Gastrocnemius medialis (tissue), 4 donors: ENCODE measurements at regions of chr6 and their contacts with region 1.

Region 1: DNA sequence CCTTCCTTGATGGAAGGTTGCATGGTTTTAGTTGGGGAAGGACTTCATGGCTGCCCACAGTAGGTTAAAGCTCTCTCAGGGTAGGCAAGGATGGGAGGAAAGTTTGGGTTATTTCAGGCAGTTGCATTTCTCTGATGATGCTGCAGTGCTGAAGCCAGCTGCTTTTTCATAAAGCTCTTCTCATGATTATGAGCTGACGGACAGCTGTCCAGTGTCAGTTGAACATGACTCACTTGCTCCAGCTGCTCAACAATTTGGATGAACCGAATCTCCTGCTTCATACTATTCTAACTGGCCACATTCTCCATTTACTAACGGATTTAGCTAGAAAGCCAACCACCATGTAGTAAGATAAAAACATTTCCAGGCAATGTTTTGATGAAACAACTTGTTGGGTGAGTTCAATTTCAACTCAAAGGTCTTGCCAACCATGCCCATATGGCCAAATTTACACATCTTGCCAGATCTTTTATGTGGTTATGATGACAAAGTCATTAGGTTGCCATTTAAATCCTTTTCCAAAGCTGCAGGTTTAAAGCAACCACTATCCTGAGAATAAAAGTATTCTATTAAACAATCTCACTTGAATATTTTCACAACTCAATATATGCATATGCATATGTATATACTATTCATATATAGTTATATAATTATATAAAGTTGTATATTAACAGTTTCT is 125.9 kb downstream of the HS3ST5 start:
- DNase-seq: peak; percentile 76 to 78
- ATAC-seq: peak; percentile 91 to 96
- H3K4me3 ChIP-seq: peak overlapping the region in 3 of 4 donors; percentile 3 to 39 (median 21)
- H3K27ac ChIP-seq: peak overlapping the region; percentile 77 to 90 (median 82)
- H3K4me1 ChIP-seq: peaks cover 0 to 22% of the 10 kb centered on the region in 2 donors
- H3K27me3 ChIP-seq: no peaks in the 10 kb centered on the region
- CTCF ChIP-seq: no peak
- POLR2A ChIP-seq: no peak

Region 2: GRCh38 chr6:113632220-113632864 is 584.6 kb before region 1 on chr6:
- in situ Hi-C with region 1: no loop called
- intact Hi-C with region 1: loop called (anchors 5 kb)
- DNase-seq: peak; percentile 88 to 90
- ATAC-seq: peak; percentile 90 to 95
- H3K4me3 ChIP-seq: peak overlapping the region; percentile 36 to 59 (median 50)
- H3K27ac ChIP-seq: peak overlapping the region; percentile 87 to 98 (median 90)
- H3K4me1 ChIP-seq: peaks cover 47 to 59% of the 10 kb centered on the region in 2 donors
- H3K27me3 ChIP-seq: no peaks in the 10 kb centered on the region
- CTCF ChIP-seq: no peak
- POLR2A ChIP-seq: peak; percentile 61 to 90

Region 3: DNA sequence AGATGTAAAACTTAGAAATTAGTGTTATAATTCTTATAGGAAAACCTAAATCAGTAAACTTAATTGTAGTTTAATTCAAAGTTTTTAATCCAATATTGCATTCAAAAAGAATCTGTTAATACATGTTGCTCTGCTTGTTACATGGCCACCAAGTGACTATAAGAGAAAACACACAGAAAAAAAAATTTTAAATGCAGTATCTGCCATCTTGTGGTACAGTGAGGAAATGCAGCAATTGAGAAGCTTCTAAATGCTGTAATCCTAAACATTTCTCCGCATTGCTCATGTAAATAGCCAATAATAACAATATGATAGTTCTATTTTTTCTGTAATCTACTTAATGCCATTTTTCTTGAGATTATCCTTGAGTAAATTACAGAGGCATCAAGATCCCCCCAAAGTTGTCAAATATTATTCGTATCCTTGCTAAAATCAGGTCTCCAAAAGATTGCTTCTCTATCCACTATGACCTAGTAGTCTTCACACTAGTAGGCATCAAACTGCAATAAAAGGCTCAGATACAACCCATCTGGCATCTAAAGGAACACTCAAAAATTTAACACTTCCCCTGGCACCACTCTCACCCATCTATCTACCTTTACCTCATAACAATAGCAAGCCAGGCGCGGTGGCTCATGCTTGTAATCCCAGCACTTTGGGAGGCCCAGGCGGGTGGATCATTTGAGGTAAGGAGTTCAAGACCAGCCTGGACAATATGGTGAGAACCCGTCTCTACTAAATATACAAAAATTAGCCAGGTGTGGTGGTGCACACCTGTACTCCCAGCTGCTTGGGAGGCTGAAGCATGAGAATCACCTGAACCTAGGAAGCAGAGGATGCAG is 280.6 kb before region 1 on chr6:
- in situ Hi-C with region 1: no loop called
- intact Hi-C with region 1: no loop called
- DNase-seq: no peak
- ATAC-seq: no peak
- H3K4me3 ChIP-seq: no peak overlapping the region
- H3K27ac ChIP-seq: no peak overlapping the region
- H3K4me1 ChIP-seq: no peaks in the 10 kb centered on the region
- H3K27me3 ChIP-seq: no peaks in the 10 kb centered on the region
- CTCF ChIP-seq: peak; percentile 26 to 77 (median 73)
- POLR2A ChIP-seq: no peak

Region 4: DNA sequence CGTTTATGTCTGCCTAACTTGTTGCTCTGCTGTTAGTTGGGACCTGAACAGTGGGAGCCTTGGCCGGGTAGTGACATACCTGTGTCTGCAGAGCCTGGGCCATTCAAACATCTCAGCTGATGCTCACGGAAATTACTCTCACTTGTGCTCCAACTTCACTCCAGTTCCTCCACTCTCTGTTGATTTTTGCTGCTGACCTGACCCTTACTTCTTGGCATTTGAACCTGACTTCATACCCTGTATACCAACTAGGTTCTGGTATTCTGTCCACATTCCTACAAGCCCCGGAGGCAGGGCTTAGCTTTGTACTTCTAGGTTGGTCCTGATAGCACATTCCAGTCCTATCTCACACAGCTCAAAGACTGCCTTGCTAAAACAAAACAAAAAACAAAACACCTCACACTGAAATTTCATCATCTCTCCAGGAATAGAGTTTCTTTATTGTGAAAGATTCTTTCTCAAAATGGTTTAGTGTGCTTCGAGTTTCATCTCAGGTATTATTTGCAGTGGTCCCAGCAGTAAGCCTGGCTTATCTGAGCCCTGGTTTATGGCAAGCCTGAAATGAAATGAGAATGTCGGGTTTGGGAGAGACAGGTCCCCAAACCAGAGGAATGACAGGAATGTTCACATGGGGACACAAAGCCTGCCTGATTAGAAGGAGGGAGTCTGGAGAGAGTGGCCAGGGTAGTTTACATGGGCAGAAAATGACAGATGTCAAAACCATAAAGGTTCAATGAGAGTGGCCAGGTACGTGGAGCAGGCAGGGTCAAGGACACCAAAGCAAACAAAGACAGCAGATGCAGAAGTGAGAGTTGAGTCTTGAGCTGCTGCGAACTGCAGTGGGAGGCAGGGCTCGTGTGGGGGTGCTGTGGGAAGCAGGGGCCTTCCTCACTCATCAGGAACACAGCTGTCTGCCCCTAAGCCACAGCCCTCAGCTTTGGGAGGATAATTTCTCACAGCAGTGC is 71.8 kb before region 1 on chr6:
- in situ Hi-C with region 1: no loop called
- intact Hi-C with region 1: no loop called
- DNase-seq: no peak
- ATAC-seq: peak in 1 of 2 donors; percentile 64
- H3K4me3 ChIP-seq: no peak overlapping the region
- H3K27ac ChIP-seq: peak overlapping the region in 1 of 4 donors; percentile 16
- H3K4me1 ChIP-seq: peaks cover 11 to 20% of the 10 kb centered on the region in 2 donors
- H3K27me3 ChIP-seq: no peaks in the 10 kb centered on the region
- CTCF ChIP-seq: no peak
- POLR2A ChIP-seq: no peak

Region 5: DNA sequence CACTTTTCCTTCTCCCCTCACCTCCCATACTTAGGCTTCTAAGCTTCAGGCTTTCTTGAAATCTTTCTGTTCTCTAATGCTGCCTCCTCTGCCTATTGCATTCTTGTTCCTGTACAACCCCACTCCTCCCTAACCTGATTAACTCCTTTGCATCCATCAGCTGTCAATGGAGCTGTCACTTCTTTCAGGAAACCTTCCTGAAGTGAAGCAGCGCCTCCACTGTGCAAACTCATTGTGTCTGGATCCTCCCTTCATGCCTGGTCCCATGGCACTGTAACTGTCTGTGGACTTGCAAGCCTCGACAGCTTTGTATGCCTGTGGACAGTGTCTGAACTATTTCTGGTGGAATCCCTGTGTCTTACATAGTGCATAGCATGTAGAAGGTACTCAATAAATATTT is 59.1 kb before region 1 on chr6:
- in situ Hi-C with region 1: no loop called
- intact Hi-C with region 1: no loop called
- DNase-seq: no peak
- ATAC-seq: no peak
- H3K4me3 ChIP-seq: no peak overlapping the region
- H3K27ac ChIP-seq: no peak overlapping the region
- H3K4me1 ChIP-seq: no peaks in the 10 kb centered on the region
- H3K27me3 ChIP-seq: no peaks in the 10 kb centered on the region
- CTCF ChIP-seq: no peak
- POLR2A ChIP-seq: no peak